Colonic mucosa (tissue), 4 donors: ENCODE measurements at regions of chr7 and their contacts with region 1.

Region 1: DNA sequence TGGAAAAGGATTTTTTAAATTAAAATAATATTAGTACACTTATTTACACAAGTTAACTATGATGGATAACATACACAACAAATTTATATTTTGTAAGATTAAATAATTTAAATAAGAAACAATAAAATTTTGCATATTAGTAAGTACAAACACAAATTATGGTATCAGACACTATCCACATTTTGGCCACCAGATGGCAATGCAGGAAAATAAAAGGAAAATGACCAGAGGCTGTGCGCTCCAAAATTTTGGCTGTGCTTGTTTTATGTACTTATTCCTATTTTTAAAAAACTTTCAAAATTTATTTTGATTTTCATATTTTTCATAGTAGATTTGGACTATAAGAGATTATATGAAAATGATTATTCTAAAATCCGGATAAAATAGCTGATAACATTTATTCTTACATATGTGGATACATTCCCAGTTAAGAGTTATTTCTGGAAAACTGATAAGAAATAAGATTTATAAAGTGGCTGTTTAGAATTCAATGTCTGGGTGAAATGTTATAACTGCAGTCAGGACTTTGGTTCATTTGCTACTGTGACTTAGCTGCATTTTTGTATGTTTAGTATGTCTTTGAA is 274.7 kb upstream of the HGF start:
- DNase-seq: peak; percentile 40
- H3K4me3 ChIP-seq: no peak overlapping the region
- H3K27ac ChIP-seq: no peak overlapping the region
- H3K4me1 ChIP-seq: no peaks in the 10 kb centered on the region
- H3K27me3 ChIP-seq: no peaks in the 10 kb centered on the region
- CTCF ChIP-seq: peak; percentile 52

Region 2: GRCh38 chr7:81415181-81415580 is 629.4 kb before region 1 on chr7:
- intact Hi-C with region 1: no loop called
- DNase-seq: no peak
- H3K4me3 ChIP-seq: no peak overlapping the region
- H3K27ac ChIP-seq: no peak overlapping the region
- H3K4me1 ChIP-seq: no peaks in the 10 kb centered on the region
- H3K27me3 ChIP-seq: no peaks in the 10 kb centered on the region
- CTCF ChIP-seq: no peak

Region 3: GRCh38 chr7:82566752-82567151 is 522.2 kb after region 1 on chr7:
- intact Hi-C with region 1: loop called (anchors 5 kb)
- DNase-seq: no peak
- H3K4me3 ChIP-seq: no peak overlapping the region
- H3K27ac ChIP-seq: no peak overlapping the region
- H3K4me1 ChIP-seq: no peaks in the 10 kb centered on the region
- H3K27me3 ChIP-seq: no peaks in the 10 kb centered on the region
- CTCF ChIP-seq: no peak

Region 4: DNA sequence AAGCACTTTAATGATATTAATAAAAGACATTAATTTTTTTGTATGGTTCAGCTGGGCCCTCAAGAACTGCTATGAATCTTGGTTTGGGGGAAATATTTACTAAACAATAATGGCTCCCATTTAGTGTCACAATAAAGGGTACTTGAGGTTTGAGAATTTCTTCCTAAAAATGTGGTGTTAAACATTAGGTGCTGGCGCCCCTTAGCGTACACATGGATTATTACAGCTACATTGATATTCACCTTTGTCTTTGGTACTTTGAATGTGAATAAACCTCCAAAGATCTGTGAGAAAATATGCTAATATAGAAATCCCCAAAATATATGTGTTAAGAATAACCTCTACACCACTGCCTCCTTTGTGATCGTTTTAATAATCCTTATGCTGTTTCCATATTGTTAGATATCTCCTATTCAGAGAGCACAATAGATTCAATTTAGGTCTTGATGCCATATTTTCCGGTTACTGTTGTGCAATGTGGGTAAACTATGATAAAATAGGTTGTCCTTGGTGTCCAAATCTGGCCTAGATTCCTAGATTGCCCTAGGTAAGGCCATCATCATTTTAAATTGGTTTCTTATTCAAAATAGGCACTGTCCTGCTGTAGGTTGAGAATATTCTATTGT is 560.8 kb after region 1 on chr7:
- intact Hi-C with region 1: loop called (anchors 10 kb)
- DNase-seq: no peak
- H3K4me3 ChIP-seq: no peak overlapping the region
- H3K27ac ChIP-seq: no peak overlapping the region
- H3K4me1 ChIP-seq: no peaks in the 10 kb centered on the region
- H3K27me3 ChIP-seq: no peaks in the 10 kb centered on the region
- CTCF ChIP-seq: peak; percentile 59